ENCODE measurements at regions of chr13 and their contacts with region 1.

Region 1: GRCh38 chr13:77555246-77555645 is 19.7 kb downstream of the SCEL start:
- DNase-seq: no peak

Region 2: DNA sequence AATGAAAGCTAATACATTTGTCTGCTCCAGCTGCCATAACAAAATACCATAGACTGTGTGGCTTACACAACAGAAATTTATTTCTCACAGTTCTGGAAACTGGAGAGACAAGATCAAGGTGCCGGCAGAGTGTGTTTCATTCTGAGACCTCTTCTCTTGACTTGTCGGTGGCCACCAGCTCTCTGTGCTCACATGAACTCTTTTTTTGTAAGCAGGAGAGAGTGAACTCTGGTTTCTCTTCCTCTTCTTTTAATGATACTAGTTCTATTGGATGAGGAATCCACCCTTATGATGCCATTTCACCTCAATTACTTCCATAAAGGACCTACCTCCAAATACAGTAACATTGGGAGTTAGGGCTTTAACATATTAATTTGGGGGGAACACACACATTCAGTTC is 680.8 kb before region 1 on chr13:
- intact Hi-C with region 1: loop called in 1 of 2 experiments (anchors 5 kb)
- DNase-seq: no peak

Region 3: GRCh38 chr13:77919921-77920294 is 364.7 kb after region 1 on chr13:
- intact Hi-C with region 1: loop called in 1 of 2 experiments (anchors 5 kb)
- DNase-seq: no peak